CD4-positive, alpha-beta T cell (primary cell): ENCODE measurements at regions of chr10 and their contacts with region 1.

Region 1: DNA sequence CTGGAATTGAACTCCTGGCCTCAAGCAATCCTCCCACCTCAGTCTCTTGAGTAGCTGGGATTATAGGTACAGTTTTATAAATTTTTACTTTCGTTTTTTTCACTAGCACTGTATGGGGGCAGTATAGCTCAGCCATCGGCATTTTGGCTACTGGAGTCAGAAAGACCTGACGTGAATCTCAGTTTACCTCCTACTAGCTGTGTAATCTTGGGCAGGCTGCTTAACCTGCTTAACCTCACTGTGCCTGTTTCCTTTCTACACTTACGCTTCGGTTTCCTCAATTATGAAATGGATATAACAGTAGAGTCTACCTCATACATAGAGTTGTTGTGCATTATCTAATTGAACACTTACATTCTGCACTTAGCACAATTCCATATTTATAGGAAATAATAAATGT is 16.7 kb downstream of the STN1 start:
- DNase-seq: peak in 4 of 14 experiments; percentile 19 to 51 (median 40)
- ATAC-seq: peak; percentile 46
- H3K4me3 ChIP-seq: no peak overlapping the region
- H3K4me3 Mint-ChIP-seq: peak overlapping the region; percentile 51
- H3K27ac ChIP-seq: no peak overlapping the region
- H3K27ac Mint-ChIP-seq: peak overlapping the region; percentile 67
- H3K4me1 ChIP-seq: peaks cover 26% of the 10 kb centered on the region
- H3K4me1 Mint-ChIP-seq: peaks cover 38% of the 10 kb centered on the region
- H3K27me3 ChIP-seq: no peaks in the 10 kb centered on the region
- H3K27me3 Mint-ChIP-seq: no peaks in the 10 kb centered on the region
- CTCF ChIP-seq: no peak

Region 2: GRCh38 chr10:103870516-103870915 is 30.8 kb before region 1 on chr10:
- CTCF ChIA-PET with region 1: no interaction called
- POLR2A ChIA-PET with region 1: no interaction called
- intact Hi-C with region 1: no loop called
- DNase-seq: no peak
- ATAC-seq: no peak
- H3K4me3 ChIP-seq: no peak overlapping the region
- H3K4me3 Mint-ChIP-seq: no peak overlapping the region
- H3K27ac ChIP-seq: no peak overlapping the region
- H3K27ac Mint-ChIP-seq: no peak overlapping the region
- H3K4me1 ChIP-seq: no peaks in the 10 kb centered on the region
- H3K4me1 Mint-ChIP-seq: no peaks in the 10 kb centered on the region
- H3K27me3 ChIP-seq: no peaks in the 10 kb centered on the region
- H3K27me3 Mint-ChIP-seq: no peaks in the 10 kb centered on the region
- CTCF ChIP-seq: no peak

Region 3: DNA sequence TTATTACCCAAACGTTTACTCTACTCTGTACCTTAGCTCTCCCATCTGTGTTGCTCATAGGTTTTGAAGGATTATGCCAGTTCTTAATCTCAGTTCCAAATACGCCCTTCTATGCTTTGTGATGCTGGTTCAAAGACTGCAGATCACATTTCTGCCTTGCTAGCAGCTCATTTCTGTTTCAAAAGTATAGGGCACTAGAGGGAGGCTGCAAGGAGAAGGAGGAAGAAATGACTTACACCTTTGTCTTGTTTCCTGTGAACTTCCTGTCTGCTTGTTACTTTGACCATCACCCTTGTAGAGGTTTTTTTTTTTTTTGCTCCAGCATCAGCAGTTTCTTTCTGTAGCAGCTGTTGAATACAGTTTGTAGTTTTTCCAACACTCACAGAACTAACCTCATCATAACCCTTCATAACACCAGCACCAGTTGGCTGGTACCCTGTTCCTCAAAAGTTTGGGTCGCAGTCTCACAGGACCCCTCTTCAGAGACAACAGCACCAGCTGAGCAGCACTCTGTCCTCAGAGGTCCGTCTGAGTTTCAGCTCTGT is 82.1 kb after region 1 on chr10:
- CTCF ChIA-PET with region 1: no interaction called
- POLR2A ChIA-PET with region 1: no interaction called
- intact Hi-C with region 1: loop called in 1 of 2 experiments (anchors 5 kb)
- DNase-seq: peak in 4 of 14 experiments; percentile 26 to 63 (median 56)
- ATAC-seq: peak; percentile 82
- H3K4me3 ChIP-seq: peak overlapping the region; percentile 0
- H3K4me3 Mint-ChIP-seq: peak overlapping the region; percentile 12
- H3K27ac ChIP-seq: peak overlapping the region; percentile 34 to 69
- H3K27ac Mint-ChIP-seq: peak overlapping the region; percentile 65
- H3K4me1 ChIP-seq: peaks cover 25% of the 10 kb centered on the region
- H3K4me1 Mint-ChIP-seq: peaks cover 72% of the 10 kb centered on the region
- H3K27me3 ChIP-seq: no peaks in the 10 kb centered on the region
- H3K27me3 Mint-ChIP-seq: no peaks in the 10 kb centered on the region
- CTCF ChIP-seq: no peak